PC-3 (cell line): ENCODE measurements at regions of chr17 and their contacts with region 1.

Region 1: DNA sequence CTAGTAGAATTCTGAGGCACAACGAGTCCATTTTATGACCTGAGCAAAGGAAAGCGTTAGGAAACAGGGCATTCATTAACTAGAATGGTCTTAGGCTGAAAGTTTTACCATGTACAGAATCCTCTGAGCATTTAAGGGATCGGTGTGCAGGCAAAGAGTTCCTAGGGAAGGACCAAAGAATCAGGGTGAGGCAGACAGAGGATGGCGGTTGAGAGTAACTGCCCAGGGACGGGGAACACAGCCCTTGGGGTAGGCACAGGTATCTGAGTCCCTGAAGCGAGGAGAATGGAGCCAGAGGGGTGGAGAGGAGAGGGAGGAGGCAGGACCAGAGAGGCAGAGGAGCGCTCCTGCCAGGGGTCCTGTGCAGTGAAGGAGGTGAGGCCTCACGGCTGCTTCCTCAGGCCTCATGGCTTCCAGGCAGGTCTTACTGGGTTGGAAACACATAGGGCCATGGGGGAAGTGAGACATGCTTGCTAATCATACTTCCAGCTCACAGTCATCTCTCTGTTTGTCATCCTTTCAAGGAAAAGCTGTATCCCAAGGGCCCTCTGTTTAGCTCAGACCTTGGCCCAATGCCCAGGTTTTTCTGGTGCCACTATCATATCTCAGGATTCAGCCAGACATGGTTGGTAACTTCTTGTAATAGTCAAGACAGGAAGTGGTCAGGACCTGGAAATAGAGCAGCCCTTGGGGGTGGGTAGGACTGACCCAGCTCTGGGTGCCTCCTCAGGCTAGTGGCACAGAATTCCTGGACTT is 13.8 kb upstream of the ITGB3 start:
- DNase-seq: peak; percentile 100
- ATAC-seq: peak; percentile 98
- H3K4me3 ChIP-seq: no peak overlapping the region
- H3K27ac ChIP-seq: peak overlapping the region; percentile 84
- H3K4me1 ChIP-seq: peaks cover 21% of the 10 kb centered on the region
- H3K27me3 ChIP-seq: no peaks in the 10 kb centered on the region
- CTCF ChIP-seq: no peak

Region 2: GRCh38 chr17:47305302-47305923 is 65.6 kb after region 1 on chr17:
- CTCF ChIA-PET with region 1: interaction called, 6 read pairs
- POLR2A ChIA-PET with region 1: interaction called, 8 read pairs
- intact Hi-C with region 1: loop called (anchors 1 kb)
- DNase-seq: peak; percentile 100
- ATAC-seq: peak; percentile 92
- H3K4me3 ChIP-seq: no peak overlapping the region
- H3K27ac ChIP-seq: peak overlapping the region; percentile 56
- H3K4me1 ChIP-seq: peaks cover 24% of the 10 kb centered on the region
- H3K27me3 ChIP-seq: no peaks in the 10 kb centered on the region
- CTCF ChIP-seq: peak; percentile 33; the same call in 1 of the 2 replicates

Region 3: GRCh38 chr17:47615766-47616424 is 376.1 kb after region 1 on chr17:
- CTCF ChIA-PET with region 1: interaction called, 13 read pairs
- POLR2A ChIA-PET with region 1: no interaction called
- intact Hi-C with region 1: no loop called
- DNase-seq: peak; percentile 92
- ATAC-seq: peak; percentile 34
- H3K4me3 ChIP-seq: no peak overlapping the region
- H3K27ac ChIP-seq: no peak overlapping the region
- H3K4me1 ChIP-seq: peaks cover 28% of the 10 kb centered on the region
- H3K27me3 ChIP-seq: no peaks in the 10 kb centered on the region
- CTCF ChIP-seq: peak; percentile 97